GM12878 (cell line): ENCODE measurements at regions of chr5 and their contacts with region 1.

Region 1: GRCh38 chr5:111229871-111230810 is 6.0 kb downstream of the CAMK4 start:
- DNase-seq: no peak
- ATAC-seq: peak; percentile 47
- H3K4me3 ChIP-seq: peak overlapping the region; percentile 62
- H3K27ac ChIP-seq: peak overlapping the region; percentile 85
- H3K4me1 ChIP-seq: peaks cover 54% of the 10 kb centered on the region
- H3K27me3 ChIP-seq: no peaks in the 10 kb centered on the region
- CTCF ChIP-seq: no peak
- EP300 ChIP-seq: peak; percentile 45 to 52; a peak in 2 of 4 replicates
- POLR2A ChIP-seq: no peak
- RAD21 ChIP-seq: no peak

Region 2: DNA sequence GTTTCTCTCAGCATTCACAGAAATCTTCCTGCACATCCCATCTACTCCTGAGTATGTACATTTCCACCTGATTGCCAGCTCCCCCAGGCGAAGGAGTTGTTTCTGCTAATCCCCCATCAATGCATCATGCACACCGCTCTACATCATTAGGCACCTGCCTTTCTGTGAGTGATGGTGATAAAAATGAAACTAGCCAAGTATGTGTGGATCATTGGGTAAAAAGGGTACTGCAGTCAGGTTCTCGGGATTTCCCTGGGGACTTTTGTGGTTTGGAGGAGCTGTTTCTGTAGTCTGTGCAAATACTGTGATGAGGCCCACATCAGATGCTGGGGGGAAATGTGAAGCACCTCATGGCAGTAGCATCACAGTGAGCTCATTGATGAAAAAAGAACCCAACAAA is 24.5 kb after region 1 on chr5:
- CTCF ChIA-PET with region 1: interaction called, 263 read pairs
- POLR2A ChIA-PET with region 1: interaction called, 172 read pairs
- RAD21 ChIA-PET with region 1: interaction called, 443 read pairs
- SMC1A ChIA-PET with region 1: interaction called, 608 read pairs
- in situ Hi-C with region 1: no loop called
- intact Hi-C with region 1: loop called (anchors 1 kb)
- DNase-seq: peak; percentile 95
- ATAC-seq: peak; percentile 81
- H3K4me3 ChIP-seq: 0 out of 2 replicates have a peak overlapping the region, but pooled peaks have one; percentile 44
- H3K27ac ChIP-seq: peak overlapping the region; percentile 83
- H3K4me1 ChIP-seq: peaks cover 46% of the 10 kb centered on the region
- H3K27me3 ChIP-seq: no peaks in the 10 kb centered on the region
- CTCF ChIP-seq: no peak
- EP300 ChIP-seq: peak; percentile 94
- POLR2A ChIP-seq: peak; percentile 66
- RAD21 ChIP-seq: peak; percentile 30; the same call in 1 of the 2 replicates